Calu3 (cell line): ENCODE measurements at regions of chr1 and their contacts with region 1.

Region 1: GRCh38 chr1:219523411-219523810 is 89.5 kb downstream of the ZC3H11B start:
- DNase-seq: no peak
- H3K4me3 Mint-ChIP-seq: no peak overlapping the region
- H3K27ac Mint-ChIP-seq: no peak overlapping the region
- H3K4me1 Mint-ChIP-seq: peaks cover 15% of the 10 kb centered on the region
- H3K27me3 Mint-ChIP-seq: no peaks in the 10 kb centered on the region
- CTCF ChIP-seq: no peak

Region 2: GRCh38 chr1:217955723-217956122 is 1567.7 kb before region 1 on chr1:
- CTCF ChIA-PET with region 1: no interaction called
- intact Hi-C with region 1: loop called (anchors 5 kb)
- DNase-seq: no peak
- H3K4me3 Mint-ChIP-seq: no peak overlapping the region
- H3K27ac Mint-ChIP-seq: no peak overlapping the region
- H3K4me1 Mint-ChIP-seq: peaks cover 15% of the 10 kb centered on the region
- H3K27me3 Mint-ChIP-seq: no peaks in the 10 kb centered on the region
- CTCF ChIP-seq: no peak